ENCODE measurements at regions of chr16 and their contacts with region 1.

Region 1: DNA sequence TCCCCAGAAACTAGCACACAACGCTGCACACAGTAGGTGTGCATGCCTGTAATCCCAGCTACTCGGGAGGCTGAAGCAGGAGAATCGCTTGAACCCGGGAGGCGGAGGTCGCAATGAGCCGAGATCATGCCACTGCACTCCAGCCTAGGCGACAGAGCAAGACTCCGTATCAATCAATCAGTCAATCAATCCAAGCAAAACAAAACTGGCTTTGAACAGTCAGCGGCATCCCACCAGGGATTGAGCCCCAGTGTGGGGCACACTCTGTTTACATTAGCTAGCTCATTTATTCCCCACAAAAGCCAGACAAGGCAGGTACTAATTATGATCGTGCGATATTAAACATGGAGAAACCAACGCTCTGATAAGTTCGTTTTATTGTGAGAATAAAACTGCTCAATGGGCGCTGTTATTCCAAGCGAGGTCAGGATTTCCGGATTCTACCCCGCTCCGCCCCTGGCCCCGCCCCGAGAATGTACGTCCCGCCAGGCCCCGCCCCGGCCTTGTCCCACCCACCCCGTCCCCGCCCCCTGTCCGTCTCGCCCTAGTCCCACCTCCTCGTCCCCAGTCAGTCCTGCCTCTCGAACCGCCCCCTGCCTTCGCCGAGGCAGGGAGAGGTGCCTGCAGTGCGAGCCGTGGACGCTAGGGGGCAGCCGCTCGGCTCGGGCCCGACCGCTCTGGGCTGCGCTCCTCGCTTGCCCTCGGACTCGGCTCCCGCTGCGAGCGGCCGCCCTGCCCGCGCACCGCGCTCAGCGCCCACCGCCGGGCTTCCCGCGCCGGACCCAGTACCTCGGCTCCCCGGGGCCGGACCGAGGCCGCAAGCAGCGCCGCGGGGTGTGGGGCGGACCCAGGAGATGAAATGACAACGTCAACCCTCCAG is at the start of gene VPS4A:
- DNase-seq: peak; percentile 76
- H3K4me3 ChIP-seq: peak within 1 kb of the TSS; percentile 82
- CTCF ChIP-seq: peak; percentile 99

Region 2: DNA sequence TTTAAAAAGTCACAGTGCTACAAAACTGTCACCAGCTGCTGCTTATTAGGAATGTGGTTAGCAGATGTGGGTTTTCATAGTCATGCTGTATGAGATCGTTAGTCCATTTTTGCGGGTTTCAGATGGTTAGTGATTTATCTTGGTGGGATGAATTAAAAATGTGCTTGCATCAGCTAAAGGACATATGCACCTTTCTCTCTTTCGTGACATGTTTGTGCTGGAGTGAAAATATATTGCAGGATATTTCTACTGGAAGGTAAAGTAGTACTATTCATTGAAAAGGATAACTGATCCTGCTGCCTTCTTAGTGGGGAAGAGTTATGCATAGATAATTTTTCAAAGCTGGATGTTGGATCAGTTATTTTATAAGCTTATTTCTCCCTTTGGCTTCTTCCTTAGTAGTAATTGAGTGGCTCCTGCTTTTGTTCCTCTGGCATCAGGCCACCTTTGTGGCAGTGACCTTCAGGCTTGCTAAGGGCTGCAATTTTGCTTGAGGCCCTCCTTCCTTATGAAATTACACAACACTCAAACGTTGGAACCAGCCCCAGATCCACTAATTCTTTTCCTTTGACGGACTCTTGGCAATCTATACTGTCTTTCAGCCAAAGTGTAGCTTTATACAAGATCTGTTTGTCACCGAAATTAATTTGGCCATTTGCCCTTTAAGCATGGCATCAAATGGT is 131.4 kb before region 1 on chr16:
- CTCF ChIA-PET with region 1: no interaction called
- POLR2A ChIA-PET with region 1: no interaction called
- DNase-seq: peak; percentile 54
- H3K4me3 ChIP-seq: no peak overlapping the region
- CTCF ChIP-seq: no peak

Region 3: DNA sequence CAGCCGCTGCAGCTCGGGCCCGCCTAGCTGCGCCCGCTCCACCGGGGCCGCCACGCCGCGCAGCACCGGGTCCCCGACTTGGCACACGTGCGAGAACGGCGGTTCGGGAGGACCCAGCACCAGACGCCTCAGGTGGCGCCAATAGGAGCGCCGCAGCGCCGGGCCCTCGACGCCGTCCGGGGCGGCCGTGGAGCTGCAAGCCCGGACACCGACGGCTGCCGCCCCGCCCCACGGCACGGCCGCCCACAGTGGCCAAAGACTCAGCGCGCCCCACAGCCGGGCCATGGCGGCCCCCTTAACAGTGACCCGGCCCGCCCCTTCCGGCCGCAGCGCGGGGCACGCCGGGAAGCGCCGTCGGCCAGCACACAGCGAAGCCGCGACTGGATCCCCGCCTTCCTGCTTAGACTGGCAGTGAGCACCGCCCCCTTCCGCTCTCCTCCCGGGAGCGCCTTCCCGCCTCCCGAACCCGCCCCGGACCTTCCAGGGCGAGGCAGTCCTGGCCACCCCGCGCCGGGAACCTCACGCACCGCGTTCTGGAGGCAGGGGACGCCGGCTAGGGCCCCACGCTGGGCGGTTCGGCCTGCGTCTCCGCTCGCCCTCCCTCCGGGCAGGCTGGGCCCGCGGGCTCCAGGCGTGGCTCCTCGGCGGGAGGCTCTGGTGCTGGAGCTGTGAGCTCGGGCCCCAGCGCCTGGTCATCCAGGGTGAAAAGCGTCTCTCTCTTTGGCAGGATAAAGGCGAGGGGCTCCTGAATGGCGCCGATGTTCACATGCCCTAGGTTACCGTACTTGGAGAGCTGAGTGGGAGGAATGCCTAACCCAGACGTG is 19.6 kb after region 1 on chr16 and contains the start of gene PDF:
- CTCF ChIA-PET with region 1: interaction called, 52 read pairs
- POLR2A ChIA-PET with region 1: no interaction called
- DNase-seq: peak; percentile 29
- H3K4me3 ChIP-seq: peak within 1 kb of the TSS; percentile 83
- CTCF ChIP-seq: no peak